ENCODE measurements at regions of chr9 and their contacts with region 1.

Region 1: GRCh38 chr9:89602978-89603766 is 1.6 kb upstream of the GADD45G start:
- DNase-seq: peak; percentile 48 to 86
- H3K4me3 ChIP-seq: no peak overlapping the region
- H3K27ac ChIP-seq: no peak overlapping the region
- H3K4me1 ChIP-seq: no peaks in the 10 kb centered on the region
- H3K27me3 ChIP-seq: peaks cover 61% of the 10 kb centered on the region
- CTCF ChIP-seq: peak; percentile 73

Region 2: DNA sequence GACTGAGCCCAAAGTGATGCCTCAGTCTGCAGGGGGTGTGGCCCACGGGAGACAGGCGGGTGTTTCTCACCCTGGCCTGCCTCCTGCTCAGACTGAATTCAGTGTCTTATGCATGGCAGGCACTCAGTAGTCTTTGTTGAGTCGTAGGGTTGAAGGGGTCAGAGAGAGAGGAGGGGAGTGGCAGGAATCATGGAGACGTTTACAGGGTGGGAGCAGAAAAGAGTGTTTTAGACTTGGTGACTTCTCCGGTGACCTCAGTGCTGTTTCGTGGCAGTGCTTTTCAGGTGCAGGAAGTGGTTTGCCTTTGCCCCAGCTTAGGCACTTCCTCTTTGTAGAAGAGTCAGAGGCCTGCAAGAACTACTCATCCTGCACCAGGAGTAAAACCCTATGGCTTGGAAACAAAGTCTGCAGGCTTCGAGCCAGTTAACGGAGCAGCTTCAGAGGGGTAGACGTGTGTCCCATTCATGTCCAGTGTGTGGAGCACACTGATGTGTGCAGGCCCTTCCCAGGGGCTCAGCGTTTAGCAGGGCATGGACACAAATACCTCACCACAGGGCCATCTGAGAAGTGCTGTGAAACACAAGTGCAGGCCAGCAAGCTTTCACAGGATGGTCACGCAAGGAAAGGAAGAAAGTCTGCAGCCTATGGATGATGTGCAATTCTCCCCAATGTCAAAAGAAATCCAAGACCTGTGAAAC is 80.8 kb before region 1 on chr9:
- CTCF ChIA-PET with region 1: no interaction called
- POLR2A ChIA-PET with region 1: interaction called, 17 read pairs
- intact Hi-C with region 1: no loop called
- DNase-seq: no peak
- H3K4me3 ChIP-seq: no peak overlapping the region
- H3K27ac ChIP-seq: no peak overlapping the region
- H3K4me1 ChIP-seq: peaks cover 52% of the 10 kb centered on the region
- H3K27me3 ChIP-seq: no peaks in the 10 kb centered on the region
- CTCF ChIP-seq: no peak

Region 3: GRCh38 chr9:89802781-89803355 is 199.7 kb after region 1 on chr9:
- CTCF ChIA-PET with region 1: interaction called, 21 read pairs
- POLR2A ChIA-PET with region 1: no interaction called
- intact Hi-C with region 1: no loop called
- DNase-seq: no peak
- H3K4me3 ChIP-seq: no peak overlapping the region
- H3K27ac ChIP-seq: no peak overlapping the region
- H3K4me1 ChIP-seq: no peaks in the 10 kb centered on the region
- H3K27me3 ChIP-seq: peaks cover 80% of the 10 kb centered on the region
- CTCF ChIP-seq: no peak

Region 4: GRCh38 chr9:89999534-90000370 is 396.6 kb after region 1 on chr9:
- CTCF ChIA-PET with region 1: no interaction called
- POLR2A ChIA-PET with region 1: no interaction called
- intact Hi-C with region 1: loop called (anchors 10 kb)
- DNase-seq: no peak
- H3K4me3 ChIP-seq: no peak overlapping the region
- H3K27ac ChIP-seq: no peak overlapping the region
- H3K4me1 ChIP-seq: no peaks in the 10 kb centered on the region
- H3K27me3 ChIP-seq: peaks cover 82% of the 10 kb centered on the region
- CTCF ChIP-seq: no peak

Region 5: GRCh38 chr9:90102292-90102901 is 499.2 kb after region 1 on chr9:
- CTCF ChIA-PET with region 1: interaction called, 12 read pairs
- POLR2A ChIA-PET with region 1: no interaction called
- intact Hi-C with region 1: loop called (anchors 1 kb)
- DNase-seq: peak; percentile 71 to 75
- H3K4me3 ChIP-seq: no peak overlapping the region
- H3K27ac ChIP-seq: no peak overlapping the region
- H3K4me1 ChIP-seq: no peaks in the 10 kb centered on the region
- H3K27me3 ChIP-seq: peaks cover 58% of the 10 kb centered on the region
- CTCF ChIP-seq: peak; percentile 72

Region 6: GRCh38 chr9:90142580-90142979 is 539.4 kb after region 1 on chr9:
- CTCF ChIA-PET with region 1: interaction called, 8 read pairs
- POLR2A ChIA-PET with region 1: no interaction called
- intact Hi-C with region 1: loop called (anchors 1 kb)
- DNase-seq: peak in 1 of 2 experiments; percentile 36
- H3K4me3 ChIP-seq: no peak overlapping the region
- H3K27ac ChIP-seq: no peak overlapping the region
- H3K4me1 ChIP-seq: no peaks in the 10 kb centered on the region
- H3K27me3 ChIP-seq: peaks cover 19% of the 10 kb centered on the region
- CTCF ChIP-seq: peak; percentile 71

Measured in PC-9 (cell line).